ENCODE measurements at regions of chr15 and their contacts with region 1.

Region 1: DNA sequence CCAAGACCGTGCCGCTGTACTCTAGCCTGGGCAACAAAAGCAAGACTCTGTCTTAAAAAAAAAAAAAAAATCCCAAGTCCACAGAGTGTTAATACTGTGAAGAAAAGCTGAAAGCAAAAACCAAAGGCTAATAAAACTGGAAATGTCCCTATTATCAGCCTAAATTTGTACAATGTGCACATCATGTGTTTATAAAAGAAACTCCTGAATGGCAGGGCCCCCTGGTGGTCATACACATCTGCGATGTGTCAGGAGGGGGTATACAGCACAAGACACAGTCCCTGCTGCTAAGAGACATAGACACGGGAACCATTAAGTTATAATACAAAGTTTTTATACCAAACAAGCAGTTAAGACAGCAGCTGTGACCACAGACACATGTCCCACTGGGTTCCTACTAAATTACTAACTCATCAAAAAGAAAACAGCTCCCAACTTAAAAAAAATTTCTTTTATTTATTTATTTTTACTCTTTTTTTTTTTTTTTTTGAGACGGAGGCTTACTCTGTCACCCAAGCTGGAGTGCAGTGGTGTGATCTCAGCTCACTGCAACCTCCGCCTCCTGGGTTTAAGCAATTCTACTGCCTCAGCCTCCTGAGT is 31.0 kb downstream of the IDH2 start:
- DNase-seq: peak; percentile 84
- ATAC-seq: peak; percentile 89
- H3K4me3 ChIP-seq: no peak overlapping the region
- H3K27ac ChIP-seq: no peak overlapping the region
- H3K4me1 ChIP-seq: peaks cover 13% of the 10 kb centered on the region
- H3K27me3 ChIP-seq: no peaks in the 10 kb centered on the region
- CTCF ChIP-seq: peak; percentile 82

Region 2: DNA sequence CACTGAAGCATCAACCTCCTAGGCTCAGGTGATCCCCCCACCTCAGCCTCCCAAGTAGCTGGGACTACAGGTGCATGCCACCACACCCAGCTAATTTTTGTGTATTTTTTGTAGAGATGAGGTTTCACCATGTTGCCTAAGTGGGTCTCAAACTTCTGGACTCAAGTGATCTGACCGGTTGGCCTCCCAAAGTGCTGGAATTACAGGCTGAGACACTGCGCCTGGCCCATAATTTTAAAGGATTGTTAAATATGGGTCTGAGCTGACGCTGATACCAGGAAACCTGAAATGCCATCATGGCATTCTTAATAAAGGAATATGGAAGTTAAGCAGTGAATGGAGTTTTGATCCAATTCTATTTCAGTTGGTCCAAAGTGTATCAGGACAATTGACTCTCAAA is 149.4 kb before region 1 on chr15:
- CTCF ChIA-PET with region 1: no interaction called
- POLR2A ChIA-PET with region 1: no interaction called
- intact Hi-C with region 1: loop called (anchors 1 kb)
- DNase-seq: no peak
- ATAC-seq: no peak
- H3K4me3 ChIP-seq: no peak overlapping the region
- H3K27ac ChIP-seq: no peak overlapping the region
- H3K4me1 ChIP-seq: peaks cover 13% of the 10 kb centered on the region
- H3K27me3 ChIP-seq: no peaks in the 10 kb centered on the region
- CTCF ChIP-seq: no peak

Region 3: DNA sequence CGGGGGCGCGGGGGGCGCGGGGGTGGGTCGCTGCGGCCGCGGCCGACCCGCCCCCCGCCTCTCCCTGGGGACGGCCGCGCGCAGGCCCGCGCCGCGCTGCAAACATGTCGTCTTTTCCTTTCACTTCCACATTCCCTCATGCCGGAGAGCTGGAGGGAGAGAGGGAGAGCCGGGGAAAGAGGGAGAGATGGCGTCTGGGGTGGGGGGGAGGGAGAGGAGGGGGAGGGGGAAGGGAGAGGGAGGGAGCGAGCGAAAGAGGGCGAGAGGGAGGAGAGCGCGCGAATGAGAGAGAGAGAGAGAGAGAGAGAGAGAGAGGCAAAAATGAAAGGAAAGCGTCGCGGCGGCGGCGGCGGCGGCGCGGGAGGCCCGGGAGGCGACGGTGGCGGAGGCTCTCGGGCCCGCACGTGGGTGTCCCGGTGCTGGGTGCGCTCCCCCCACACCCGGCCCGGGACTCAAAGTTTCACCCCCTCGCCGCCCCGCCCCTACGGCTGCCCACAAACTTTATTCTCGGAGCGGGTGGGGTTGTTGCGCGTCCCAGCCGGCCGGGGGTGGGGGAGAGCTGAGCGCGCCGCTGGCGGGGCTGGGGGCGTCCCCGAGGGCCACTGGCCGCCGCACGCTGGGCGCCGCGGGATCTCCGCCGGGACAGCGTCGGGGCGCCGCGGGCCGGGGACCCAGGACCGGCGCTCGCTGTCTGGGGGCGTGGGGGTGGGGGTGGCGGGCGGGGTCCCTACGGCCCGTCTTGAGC is 69.5 kb before region 1 on chr15:
- CTCF ChIA-PET with region 1: no interaction called
- POLR2A ChIA-PET with region 1: interaction called, 3 read pairs
- intact Hi-C with region 1: loop called (anchors 1 kb)
- DNase-seq: peak; percentile 43
- ATAC-seq: peak; percentile 9
- H3K4me3 ChIP-seq: peak overlapping the region; percentile 89
- H3K27ac ChIP-seq: peak overlapping the region; percentile 50
- H3K4me1 ChIP-seq: peaks cover 77% of the 10 kb centered on the region
- H3K27me3 ChIP-seq: no peaks in the 10 kb centered on the region
- CTCF ChIP-seq: no peak

Region 4: GRCh38 chr15:90463381-90463780 is 392.1 kb after region 1 on chr15:
- CTCF ChIA-PET with region 1: no interaction called
- POLR2A ChIA-PET with region 1: no interaction called
- intact Hi-C with region 1: no loop called
- DNase-seq: peak; percentile 22
- ATAC-seq: no peak
- H3K4me3 ChIP-seq: no peak overlapping the region
- H3K27ac ChIP-seq: no peak overlapping the region
- H3K4me1 ChIP-seq: peaks cover 10% of the 10 kb centered on the region; the same call in 1 of the 2 replicates
- H3K27me3 ChIP-seq: no peaks in the 10 kb centered on the region
- CTCF ChIP-seq: no peak

Region 5: GRCh38 chr15:91116113-91117067 is 1045.1 kb after region 1 on chr15:
- CTCF ChIA-PET with region 1: no interaction called
- POLR2A ChIA-PET with region 1: no interaction called
- intact Hi-C with region 1: no loop called
- DNase-seq: no peak
- ATAC-seq: no peak
- H3K4me3 ChIP-seq: no peak overlapping the region
- H3K27ac ChIP-seq: no peak overlapping the region
- H3K4me1 ChIP-seq: no peaks in the 10 kb centered on the region
- H3K27me3 ChIP-seq: peaks cover 83% of the 10 kb centered on the region
- CTCF ChIP-seq: no peak

Measured in PC-3 (cell line).